AG04450 (cell line): ENCODE measurements at regions of chr5 and their contacts with region 1.

Region 1: DNA sequence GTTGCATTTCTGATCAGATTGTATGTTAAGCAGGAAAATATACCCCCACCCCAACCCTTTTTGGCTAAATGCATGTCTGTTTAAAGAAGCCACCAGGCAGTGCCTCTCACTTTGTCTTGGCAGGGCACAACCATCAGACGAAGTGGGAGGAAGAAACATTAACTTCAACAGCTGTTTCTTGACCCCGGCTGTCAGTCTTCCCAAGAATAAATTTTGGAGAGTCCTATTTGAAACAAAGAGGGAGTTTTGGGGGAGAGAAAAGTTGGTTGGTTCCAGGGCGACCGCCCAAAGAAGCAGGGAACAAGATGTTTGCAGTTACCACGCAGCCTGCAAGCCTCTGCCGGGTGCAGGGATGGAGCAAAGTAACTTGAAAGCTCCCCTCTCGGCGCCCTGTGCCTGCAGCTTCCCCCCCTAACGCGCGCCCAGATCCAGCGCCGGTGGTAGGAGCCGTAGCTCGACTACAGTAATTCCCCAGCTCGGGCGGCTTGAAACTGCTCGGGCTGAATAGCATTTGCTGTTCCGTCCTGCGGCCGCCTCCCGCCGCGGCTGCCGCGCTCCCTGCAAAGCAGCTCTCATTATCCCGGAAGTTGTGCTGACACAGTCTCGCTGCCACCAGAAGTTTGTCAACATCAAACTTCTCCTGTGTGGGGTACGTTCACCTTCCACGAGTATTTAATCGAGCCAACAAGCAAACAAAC is 100.7 kb upstream of the SSBP2 start:
- DNase-seq: peak; percentile 88
- H3K4me3 ChIP-seq: peak overlapping the region; percentile 60
- H3K27ac ChIP-seq: peak overlapping the region; percentile 94
- H3K27me3 ChIP-seq: no peaks in the 10 kb centered on the region
- CTCF ChIP-seq: no peak

Region 2: GRCh38 chr5:81675846-81676245 is 175.8 kb before region 1 on chr5:
- CTCF ChIA-PET with region 1: interaction called, 13 read pairs
- POLR2A ChIA-PET with region 1: no interaction called
- DNase-seq: no peak
- H3K4me3 ChIP-seq: no peak overlapping the region
- H3K27ac ChIP-seq: no peak overlapping the region
- H3K27me3 ChIP-seq: no peaks in the 10 kb centered on the region
- CTCF ChIP-seq: no peak

Region 3: DNA sequence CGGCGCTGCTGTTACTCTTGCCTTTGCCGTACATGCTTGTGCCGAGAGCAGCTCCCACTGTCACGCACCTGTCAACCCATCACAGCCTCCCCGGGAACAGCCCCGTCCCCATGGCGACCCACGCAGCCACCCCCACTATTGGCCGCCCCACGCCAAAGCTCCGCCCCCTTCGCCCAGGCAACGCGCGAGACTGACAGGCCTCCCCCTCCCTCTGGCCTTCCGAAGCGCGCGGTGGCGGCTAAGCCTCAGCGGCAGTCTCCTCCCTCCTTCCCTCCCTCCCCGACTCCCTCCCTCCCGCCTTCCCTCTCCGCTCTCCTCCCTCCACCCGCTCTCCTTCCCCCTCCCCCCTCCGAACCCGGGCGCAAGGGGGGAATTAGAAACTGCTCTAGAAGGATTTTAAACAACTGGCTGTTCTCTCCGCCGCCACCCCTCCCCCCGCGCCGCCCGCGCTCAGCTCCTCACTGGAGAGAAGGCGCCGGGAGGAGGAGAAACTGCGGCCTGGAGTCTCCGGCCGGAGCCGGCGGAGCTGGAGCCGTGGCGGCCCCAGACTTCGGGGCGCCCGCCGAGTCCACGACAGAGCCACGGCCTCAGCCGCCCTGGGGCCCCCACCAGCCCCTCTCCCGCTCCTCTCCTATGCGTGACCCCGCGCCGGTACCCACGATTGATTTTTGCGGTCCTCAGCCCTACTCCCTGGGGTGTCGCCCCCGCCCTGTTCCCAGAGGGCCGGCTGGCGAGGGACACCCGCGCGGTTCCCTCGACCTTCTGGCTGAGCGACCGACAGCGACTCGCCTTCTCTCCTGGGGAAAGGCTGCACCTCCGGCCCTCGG is 100.4 kb before region 1 on chr5 and contains the start of gene SSBP2:
- CTCF ChIA-PET with region 1: interaction called, 6 read pairs
- POLR2A ChIA-PET with region 1: interaction called, 199 read pairs
- DNase-seq: peak; percentile 98
- H3K4me3 ChIP-seq: peak within 1 kb of the TSS; percentile 86
- H3K27ac ChIP-seq: peak within 1 kb of the TSS; percentile 93
- H3K27me3 ChIP-seq: no peaks in the 10 kb centered on the region
- CTCF ChIP-seq: no peak
- polyA plus RNA-seq, gene SSBP2: 70.4 and 74.3 TPM in 2 replicates

Region 4: DNA sequence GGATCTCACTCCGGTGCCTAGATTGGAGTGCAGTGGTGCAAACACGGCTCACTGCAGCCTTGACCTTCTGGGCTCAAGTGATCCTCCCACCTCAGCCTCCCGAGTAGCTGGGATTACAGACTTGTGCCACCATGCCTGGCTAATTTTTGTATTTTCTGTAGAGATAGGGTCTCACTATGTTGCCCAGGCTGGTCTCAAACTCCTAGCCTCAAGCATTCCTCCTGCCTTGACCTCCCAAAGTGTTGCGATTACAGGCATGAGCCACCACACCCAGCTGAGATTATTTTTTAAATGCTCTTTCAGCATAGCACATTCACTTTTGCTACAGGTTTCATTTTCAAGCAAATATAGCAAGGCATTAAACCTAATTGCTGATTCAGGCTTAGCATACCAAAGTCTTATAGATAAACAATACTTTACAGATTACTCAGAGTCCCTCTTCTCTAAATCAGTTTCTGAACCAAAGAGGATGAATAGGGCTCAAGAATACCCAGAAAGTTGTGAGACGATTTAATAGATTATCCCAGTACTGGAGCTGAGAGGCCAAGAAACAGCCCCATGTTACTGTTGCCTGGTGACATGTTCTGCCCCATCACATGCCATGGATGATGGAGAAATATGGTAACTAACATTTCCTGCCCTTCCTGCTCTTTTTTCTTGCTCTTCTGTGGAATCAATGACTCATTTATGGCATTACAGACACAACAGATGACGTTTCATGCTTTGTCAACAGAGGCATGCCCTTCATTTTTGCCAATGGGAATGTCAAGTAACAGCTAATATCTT is 82.8 kb before region 1 on chr5:
- CTCF ChIA-PET with region 1: no interaction called
- POLR2A ChIA-PET with region 1: interaction called, 10 read pairs
- DNase-seq: peak; percentile 43
- H3K4me3 ChIP-seq: no peak overlapping the region
- H3K27ac ChIP-seq: peak overlapping the region; percentile 62
- H3K27me3 ChIP-seq: no peaks in the 10 kb centered on the region
- CTCF ChIP-seq: no peak

Region 5: GRCh38 chr5:81787474-81788242 is 64.0 kb before region 1 on chr5:
- CTCF ChIA-PET with region 1: interaction called, 4 read pairs
- POLR2A ChIA-PET with region 1: interaction called, 32 read pairs
- DNase-seq: peak; percentile 34
- H3K4me3 ChIP-seq: no peak overlapping the region
- H3K27ac ChIP-seq: no peak overlapping the region
- H3K27me3 ChIP-seq: no peaks in the 10 kb centered on the region
- CTCF ChIP-seq: no peak

Region 6: DNA sequence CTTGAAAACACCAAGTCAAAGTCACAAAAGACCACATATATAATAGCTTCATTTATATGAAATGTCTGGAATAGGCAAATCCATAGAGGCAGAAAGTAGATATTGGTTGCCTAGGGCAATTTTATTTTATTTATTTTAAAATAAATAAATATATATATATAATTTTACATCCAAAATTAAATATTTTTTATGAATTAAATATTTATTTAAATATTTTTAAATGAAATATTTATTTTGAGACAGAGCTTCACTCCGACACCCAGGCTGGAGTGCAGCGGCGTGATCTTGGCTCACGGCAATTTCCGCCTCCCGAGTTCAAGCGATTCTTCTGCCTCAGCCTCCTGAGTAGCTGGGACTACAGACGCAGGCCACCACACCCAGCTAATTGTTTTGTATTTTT is 61.3 kb after region 1 on chr5:
- CTCF ChIA-PET with region 1: no interaction called
- POLR2A ChIA-PET with region 1: no interaction called
- DNase-seq: no peak
- H3K4me3 ChIP-seq: no peak overlapping the region
- H3K27ac ChIP-seq: no peak overlapping the region
- H3K27me3 ChIP-seq: no peaks in the 10 kb centered on the region
- CTCF ChIP-seq: no peak